PC-9 (cell line): ENCODE measurements at regions of chr16 and their contacts with region 1.

Region 1: DNA sequence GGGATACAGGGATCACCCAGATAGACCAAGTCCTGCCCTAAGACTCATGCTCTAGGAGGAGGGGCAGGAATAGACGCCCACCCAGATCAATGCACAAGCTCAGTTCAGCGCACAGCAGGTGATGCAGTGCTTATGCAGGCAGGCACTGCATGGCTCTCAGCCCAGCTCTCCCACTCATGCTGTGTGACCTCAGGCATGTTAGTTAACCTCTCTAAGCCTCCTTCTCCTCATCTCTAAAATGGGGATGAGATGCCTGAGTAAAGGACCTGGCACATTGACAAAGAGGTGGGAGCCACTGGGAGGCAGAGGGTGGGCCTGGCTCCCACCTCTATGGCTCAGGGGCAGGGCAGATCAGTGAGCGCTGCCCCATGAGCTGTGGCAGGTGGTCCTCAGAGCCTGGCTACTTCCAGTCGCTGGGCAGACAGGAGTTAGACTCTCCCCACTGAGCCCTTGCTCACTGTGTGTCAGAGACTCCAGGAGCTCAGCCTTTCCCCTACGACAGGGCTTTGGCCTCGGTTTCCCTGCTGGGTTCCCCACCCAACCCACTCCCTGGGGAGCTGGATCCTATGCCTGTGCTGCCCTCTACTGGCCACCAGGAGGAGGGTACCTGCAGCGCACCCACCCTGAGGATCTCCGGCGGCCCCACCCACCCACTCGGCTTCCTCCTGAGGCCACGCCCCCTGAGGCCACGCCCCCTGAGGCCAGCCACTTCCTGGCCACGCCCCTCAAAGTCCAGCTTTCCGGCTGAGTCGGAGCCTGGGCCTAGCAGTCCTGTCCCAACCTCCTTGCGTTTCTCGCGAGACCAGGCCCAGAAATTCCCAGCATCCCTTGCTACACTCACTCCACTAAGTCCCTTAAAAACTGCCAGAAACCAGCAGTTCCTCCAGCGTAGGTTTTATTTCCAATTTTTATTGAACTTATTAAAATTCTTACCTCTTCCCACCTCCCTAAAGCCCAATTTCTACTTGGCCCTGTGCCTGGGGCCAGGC is 196.1 kb downstream of the GSG1L start:
- DNase-seq: peak; percentile 56 to 84
- H3K4me3 ChIP-seq: no peak overlapping the region
- H3K27ac ChIP-seq: no peak overlapping the region
- H3K4me1 ChIP-seq: no peaks in the 10 kb centered on the region
- H3K27me3 ChIP-seq: peaks cover 33% of the 10 kb centered on the region
- CTCF ChIP-seq: peak; percentile 86

Region 2: DNA sequence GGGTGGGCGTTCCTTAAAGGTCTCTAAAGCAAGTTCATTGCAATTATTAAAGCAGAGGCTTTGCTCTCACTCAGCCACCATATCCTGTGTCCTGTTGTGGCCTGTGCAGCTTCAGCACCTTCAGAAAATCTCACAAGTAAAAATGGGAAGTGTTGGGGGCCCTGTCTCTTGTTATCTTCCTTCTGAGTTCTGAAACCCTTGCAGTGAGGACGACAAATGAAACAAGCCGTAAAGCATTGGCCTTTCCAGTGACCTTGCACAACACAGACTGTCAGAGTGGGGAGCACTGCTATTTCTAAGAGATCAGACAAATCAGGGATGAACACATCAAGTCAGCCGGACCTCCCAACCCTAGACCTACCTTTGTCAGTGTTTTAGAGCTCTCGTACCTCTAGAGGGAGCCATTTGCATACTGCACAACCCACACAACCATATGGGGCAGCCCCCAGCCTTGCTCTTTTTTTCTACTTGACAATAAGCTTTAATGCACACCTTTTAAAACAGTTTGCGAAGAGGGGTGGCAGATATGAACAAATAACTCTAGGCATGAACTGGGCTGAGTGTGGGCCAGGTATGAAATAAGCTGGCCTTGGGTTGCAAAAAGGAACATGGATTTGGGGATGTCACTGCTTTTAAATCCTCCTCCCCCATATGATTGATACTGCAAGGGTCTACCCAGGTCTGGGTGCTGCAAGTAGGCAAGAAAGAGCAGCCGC is 227.7 kb before region 1 on chr16:
- CTCF ChIA-PET with region 1: no interaction called
- POLR2A ChIA-PET with region 1: no interaction called
- intact Hi-C with region 1: loop called (anchors 2 kb)
- DNase-seq: peak in 1 of 2 experiments; percentile 23
- H3K4me3 ChIP-seq: no peak overlapping the region
- H3K27ac ChIP-seq: no peak overlapping the region
- H3K4me1 ChIP-seq: no peaks in the 10 kb centered on the region
- H3K27me3 ChIP-seq: no peaks in the 10 kb centered on the region
- CTCF ChIP-seq: peak; percentile 78

Region 3: DNA sequence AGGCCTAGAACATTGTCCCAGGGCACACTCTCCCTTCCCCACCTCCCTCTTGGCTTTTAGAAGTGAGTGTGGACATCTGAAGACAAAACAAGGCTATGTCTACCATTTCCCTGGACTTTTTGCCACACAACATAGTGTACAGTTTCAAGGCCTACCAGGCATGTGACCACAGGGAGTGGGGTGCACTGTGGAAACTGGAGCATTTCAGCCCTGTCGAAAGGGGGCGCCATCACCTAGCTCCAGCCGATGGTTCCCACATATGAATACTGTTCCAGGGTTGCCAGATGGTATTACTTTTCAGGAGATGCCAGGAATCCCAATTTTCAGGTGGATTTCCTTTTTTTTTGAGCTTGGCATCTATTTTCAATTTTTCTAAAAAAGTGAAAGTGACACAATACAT is 176.8 kb before region 1 on chr16:
- CTCF ChIA-PET with region 1: no interaction called
- POLR2A ChIA-PET with region 1: no interaction called
- intact Hi-C with region 1: loop called (anchors 1 kb)
- DNase-seq: peak in 1 of 2 experiments; percentile 45
- H3K4me3 ChIP-seq: no peak overlapping the region
- H3K27ac ChIP-seq: no peak overlapping the region
- H3K4me1 ChIP-seq: no peaks in the 10 kb centered on the region
- H3K27me3 ChIP-seq: no peaks in the 10 kb centered on the region
- CTCF ChIP-seq: peak; percentile 64

Region 4: DNA sequence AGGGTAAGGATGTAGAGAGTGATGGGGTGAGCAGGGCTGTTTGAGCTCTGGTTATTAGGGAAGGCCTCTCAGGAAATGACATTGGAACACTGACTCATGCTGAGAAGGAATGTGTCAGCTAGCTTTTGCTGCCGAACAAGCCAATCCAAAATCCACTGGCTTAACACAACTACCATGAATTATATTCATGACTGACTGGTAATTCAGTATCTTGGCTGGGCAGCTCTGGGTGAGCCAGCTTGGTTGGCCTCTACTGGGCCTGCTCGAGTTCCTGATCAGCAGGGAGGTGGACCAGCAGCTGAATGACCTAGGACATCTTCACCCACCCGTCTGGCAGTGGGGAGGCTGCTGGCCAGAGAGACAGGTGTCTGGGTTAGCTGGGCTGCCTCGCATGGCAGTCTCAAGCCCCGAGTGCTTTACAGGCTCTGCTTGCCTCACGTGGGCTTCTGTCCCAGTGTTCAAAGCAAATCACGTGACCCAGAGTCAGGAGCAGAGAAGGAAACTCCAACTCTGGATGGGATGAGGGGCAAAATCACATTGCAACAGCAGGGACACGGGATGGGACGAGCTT is 108.0 kb before region 1 on chr16:
- CTCF ChIA-PET with region 1: no interaction called
- POLR2A ChIA-PET with region 1: no interaction called
- intact Hi-C with region 1: no loop called
- DNase-seq: peak in 1 of 2 experiments; percentile 48
- H3K4me3 ChIP-seq: no peak overlapping the region
- H3K27ac ChIP-seq: no peak overlapping the region
- H3K4me1 ChIP-seq: 0 out of 2 replicates have a peak, but pooled peaks cover 11% of the 10 kb centered on the region
- H3K27me3 ChIP-seq: no peaks in the 10 kb centered on the region
- CTCF ChIP-seq: no peak